PC-3 (cell line): ENCODE measurements at regions of chr20 and their contacts with region 1.

Region 1: GRCh38 chr20:49219089-49219923 is at the start of gene DDX27:
- DNase-seq: peak; percentile 100
- ATAC-seq: peak; percentile 87
- H3K4me3 ChIP-seq: peak within 1 kb of the TSS; percentile 82
- H3K27ac ChIP-seq: peak within 1 kb of the TSS; percentile 45
- H3K4me1 ChIP-seq: peaks cover 15% of the 10 kb centered on the region
- H3K27me3 ChIP-seq: no peaks in the 10 kb centered on the region
- CTCF ChIP-seq: no peak
- total RNA-seq, gene DDX27: 80.8 and 97.3 TPM in 2 replicates

Region 2: DNA sequence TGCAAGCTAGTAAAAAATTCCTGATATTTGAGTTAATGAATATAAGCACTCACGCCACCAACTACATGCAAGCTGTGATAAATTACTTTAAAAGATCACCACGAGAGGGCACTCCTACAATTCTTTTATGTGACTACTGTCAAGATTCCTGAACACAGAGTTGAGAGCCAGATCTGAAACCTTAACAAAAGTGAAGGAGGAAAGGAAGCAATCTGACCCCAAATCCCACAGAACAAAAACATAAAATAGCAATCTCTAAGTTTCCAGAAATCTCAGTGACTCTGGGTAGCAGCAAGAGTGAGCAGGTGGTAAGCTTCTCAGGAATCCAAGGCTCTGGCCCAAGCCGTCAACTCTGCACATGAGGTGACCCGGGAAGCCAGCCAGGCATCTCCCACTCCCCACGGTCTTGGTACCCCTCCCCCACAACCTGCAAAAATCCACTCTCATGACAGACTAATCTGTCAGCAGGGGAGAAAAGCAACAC is 86.3 kb before region 1 on chr20:
- CTCF ChIA-PET with region 1: interaction called, 23 read pairs
- POLR2A ChIA-PET with region 1: no interaction called
- intact Hi-C with region 1: loop called (anchors 1 kb)
- DNase-seq: peak; percentile 90
- ATAC-seq: peak; percentile 88
- H3K4me3 ChIP-seq: no peak overlapping the region
- H3K27ac ChIP-seq: no peak overlapping the region
- H3K4me1 ChIP-seq: no peaks in the 10 kb centered on the region
- H3K27me3 ChIP-seq: no peaks in the 10 kb centered on the region
- CTCF ChIP-seq: peak; percentile 90

Region 3: DNA sequence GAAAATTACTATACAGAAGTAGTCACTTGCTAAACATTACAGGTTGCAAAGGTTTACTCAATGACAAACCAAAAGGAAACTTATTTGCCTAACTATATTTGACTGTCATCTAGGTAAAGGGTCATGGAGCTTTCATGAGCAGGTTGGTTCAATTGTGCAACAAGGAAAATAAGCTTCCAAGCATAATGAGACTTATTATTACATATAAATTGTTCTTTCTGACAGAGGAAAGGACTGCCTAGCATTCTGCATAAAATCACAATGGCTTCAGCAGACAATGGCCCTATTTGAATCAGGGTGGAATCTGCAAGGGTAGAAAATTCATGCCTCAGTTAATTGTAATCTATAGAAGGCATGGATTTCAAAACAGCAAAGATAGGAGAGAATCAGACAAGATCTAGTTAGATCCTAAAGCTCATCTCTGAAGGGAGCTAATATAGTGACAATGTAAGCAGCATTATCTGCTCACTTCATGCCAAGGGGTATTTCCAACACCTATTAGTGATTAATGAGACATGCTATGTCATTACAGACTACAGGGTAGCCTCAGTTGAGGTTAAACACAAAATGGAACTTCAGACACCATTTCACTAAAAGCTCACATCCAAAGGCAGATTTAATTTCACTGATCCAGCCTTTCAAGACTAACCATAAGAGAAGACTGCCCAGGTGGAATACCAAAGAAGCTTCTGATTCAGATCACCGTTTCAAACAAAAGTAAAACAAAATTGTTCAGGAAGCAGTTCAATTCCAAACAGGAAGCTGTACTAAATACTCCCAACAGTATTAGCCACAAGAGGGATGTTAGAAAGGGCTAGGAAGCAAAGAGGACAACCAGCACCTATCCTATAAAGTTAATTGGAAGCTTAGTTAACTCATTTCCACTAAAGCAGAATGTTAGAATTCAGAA is 39.7 kb before region 1 on chr20:
- CTCF ChIA-PET with region 1: interaction called, 12 read pairs
- POLR2A ChIA-PET with region 1: no interaction called
- intact Hi-C with region 1: no loop called
- DNase-seq: peak; percentile 89
- ATAC-seq: peak; percentile 89
- H3K4me3 ChIP-seq: peak overlapping the region; percentile 31
- H3K27ac ChIP-seq: peak overlapping the region; percentile 61
- H3K4me1 ChIP-seq: peaks cover 27% of the 10 kb centered on the region
- H3K27me3 ChIP-seq: no peaks in the 10 kb centered on the region
- CTCF ChIP-seq: no peak

Region 4: DNA sequence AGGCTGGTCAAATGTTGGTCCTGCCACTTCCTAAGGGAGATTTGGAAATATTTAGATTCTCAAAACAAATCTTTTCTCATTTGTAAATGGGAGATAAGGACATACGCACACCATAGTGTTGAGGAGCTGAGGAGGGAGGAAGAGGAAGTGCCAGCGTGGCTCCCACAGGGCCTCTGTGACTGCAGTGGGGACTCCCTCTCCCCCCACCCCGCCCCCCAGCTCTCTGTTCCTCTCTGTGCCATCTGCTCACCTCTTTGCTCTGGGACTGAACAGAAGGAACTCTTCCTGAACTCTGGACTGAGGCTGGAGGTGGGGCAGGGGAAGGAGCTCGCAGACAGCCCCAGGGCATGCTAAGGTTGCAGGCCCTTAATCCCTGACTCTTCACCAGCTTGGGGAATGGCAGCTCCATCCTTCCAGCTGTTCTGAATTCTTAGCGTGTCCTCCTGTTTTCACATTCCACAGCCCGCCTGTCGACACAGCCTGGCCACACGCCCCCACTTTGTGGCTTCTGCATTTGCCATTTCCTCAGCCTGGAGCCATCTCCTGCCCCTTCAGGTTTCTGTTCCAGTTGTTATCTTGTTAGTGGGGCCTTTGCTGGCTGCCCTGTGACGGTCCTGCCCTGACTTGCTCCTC is 11.4 kb after region 1 on chr20:
- CTCF ChIA-PET with region 1: no interaction called
- POLR2A ChIA-PET with region 1: no interaction called
- intact Hi-C with region 1: no loop called
- DNase-seq: no peak
- ATAC-seq: no peak
- H3K4me3 ChIP-seq: no peak overlapping the region
- H3K27ac ChIP-seq: no peak overlapping the region
- H3K4me1 ChIP-seq: no peaks in the 10 kb centered on the region
- H3K27me3 ChIP-seq: no peaks in the 10 kb centered on the region
- CTCF ChIP-seq: no peak

Region 5: GRCh38 chr20:49252556-49253350 is 33.4 kb after region 1 on chr20:
- CTCF ChIA-PET with region 1: no interaction called
- POLR2A ChIA-PET with region 1: no interaction called
- intact Hi-C with region 1: no loop called
- DNase-seq: no peak
- ATAC-seq: no peak
- H3K4me3 ChIP-seq: no peak overlapping the region
- H3K27ac ChIP-seq: no peak overlapping the region
- H3K4me1 ChIP-seq: no peaks in the 10 kb centered on the region
- H3K27me3 ChIP-seq: no peaks in the 10 kb centered on the region
- CTCF ChIP-seq: no peak

Region 6: GRCh38 chr20:49699200-49699992 is 480.1 kb after region 1 on chr20:
- CTCF ChIA-PET with region 1: no interaction called
- POLR2A ChIA-PET with region 1: no interaction called
- intact Hi-C with region 1: no loop called
- DNase-seq: peak; percentile 88
- ATAC-seq: peak; percentile 76
- H3K4me3 ChIP-seq: no peak overlapping the region
- H3K27ac ChIP-seq: peak overlapping the region; percentile 85
- H3K4me1 ChIP-seq: peaks cover 55% of the 10 kb centered on the region
- H3K27me3 ChIP-seq: no peaks in the 10 kb centered on the region
- CTCF ChIP-seq: no peak

Region 7: DNA sequence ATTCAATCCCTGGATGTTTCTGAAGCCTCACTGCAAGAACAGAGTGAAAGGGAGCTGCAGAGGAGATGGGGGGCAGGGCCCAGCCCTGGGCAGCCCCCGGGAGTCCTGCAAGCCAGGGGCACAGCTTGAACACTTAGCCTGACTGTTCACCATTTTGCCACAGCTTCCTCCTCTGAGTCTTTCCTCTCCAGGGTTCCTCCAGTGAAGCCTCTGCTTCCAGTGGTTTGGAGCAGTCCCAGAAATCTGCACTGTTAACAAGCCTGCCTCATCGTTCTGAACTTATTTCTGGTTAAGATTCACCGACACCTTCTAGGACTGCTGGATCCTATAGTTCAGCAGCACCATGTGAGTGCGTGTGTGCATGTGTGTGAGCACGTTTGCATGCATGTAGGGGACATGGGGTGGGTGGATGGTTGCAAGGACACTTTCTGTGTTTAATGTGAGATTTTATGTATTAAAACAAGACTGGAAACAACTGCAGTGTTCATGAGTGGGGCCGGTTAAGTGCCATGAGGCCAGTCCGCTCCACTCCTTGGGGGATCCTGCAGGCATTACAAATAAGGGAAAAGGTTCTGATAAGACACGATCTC is 995.9 kb after region 1 on chr20:
- CTCF ChIA-PET with region 1: no interaction called
- POLR2A ChIA-PET with region 1: no interaction called
- intact Hi-C with region 1: no loop called
- DNase-seq: no peak
- ATAC-seq: peak; percentile 24; the same call in 1 of the 2 replicates
- H3K4me3 ChIP-seq: no peak overlapping the region
- H3K27ac ChIP-seq: no peak overlapping the region
- H3K4me1 ChIP-seq: peaks cover 4% of the 10 kb centered on the region; the same call in 1 of the 2 replicates
- H3K27me3 ChIP-seq: no peaks in the 10 kb centered on the region
- CTCF ChIP-seq: no peak